Upper lobe of right lung (tissue), 1 donor: ENCODE measurements at regions of chr5 and their contacts with region 1.

Region 1: DNA sequence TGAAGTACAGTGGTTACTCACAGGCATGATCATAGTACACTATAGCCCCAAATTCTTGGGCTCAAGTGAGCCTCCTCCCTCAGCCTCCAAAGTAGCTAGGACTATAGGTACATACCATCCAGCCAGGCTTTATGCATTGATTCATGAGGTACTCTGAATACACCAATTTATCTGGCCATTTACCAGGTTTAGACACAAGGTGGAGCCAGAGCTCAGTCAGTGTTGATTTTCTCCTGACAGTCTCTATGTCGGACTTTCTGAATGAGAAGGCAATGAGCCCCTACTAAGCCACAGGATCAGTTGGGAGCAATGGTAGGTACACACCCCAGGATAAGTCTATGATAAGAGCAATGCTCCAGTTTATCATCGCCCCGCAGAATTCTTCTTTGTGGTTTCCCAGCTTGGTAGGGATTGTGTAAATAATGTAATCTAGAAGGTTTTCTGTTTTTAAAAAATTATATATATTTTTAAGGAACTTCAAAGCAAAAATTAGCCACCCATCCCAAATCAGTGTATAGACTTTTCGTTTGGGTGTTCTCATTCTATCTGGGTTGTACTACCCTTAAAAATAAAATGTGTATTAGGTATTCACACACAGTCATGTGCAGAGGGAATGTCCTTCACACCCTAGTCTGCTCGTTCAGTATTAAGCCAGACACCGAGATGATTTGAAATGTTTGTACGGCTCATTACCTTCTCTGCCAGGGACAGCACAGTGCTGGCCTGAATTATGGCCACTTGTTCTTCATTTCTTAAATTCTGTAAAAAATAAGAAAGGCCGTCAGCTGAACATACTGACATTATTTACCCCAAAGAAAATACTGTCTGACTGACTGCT is 118.4 kb upstream of the DPYSL3 start:
- DNase-seq: no peak
- ATAC-seq: peak; percentile 95
- H3K4me3 ChIP-seq: no peak overlapping the region
- H3K27ac ChIP-seq: no peak overlapping the region
- H3K4me1 ChIP-seq: no peaks in the 10 kb centered on the region
- H3K27me3 ChIP-seq: no peaks in the 10 kb centered on the region
- CTCF ChIP-seq: peak; percentile 73

Region 2: GRCh38 chr5:147530530-147531389 is 97.5 kb before region 1 on chr5:
- intact Hi-C with region 1: no loop called
- DNase-seq: no peak
- ATAC-seq: no peak
- H3K4me3 ChIP-seq: no peak overlapping the region
- H3K27ac ChIP-seq: no peak overlapping the region
- H3K4me1 ChIP-seq: no peaks in the 10 kb centered on the region
- H3K27me3 ChIP-seq: no peaks in the 10 kb centered on the region
- CTCF ChIP-seq: no peak

Region 3: DNA sequence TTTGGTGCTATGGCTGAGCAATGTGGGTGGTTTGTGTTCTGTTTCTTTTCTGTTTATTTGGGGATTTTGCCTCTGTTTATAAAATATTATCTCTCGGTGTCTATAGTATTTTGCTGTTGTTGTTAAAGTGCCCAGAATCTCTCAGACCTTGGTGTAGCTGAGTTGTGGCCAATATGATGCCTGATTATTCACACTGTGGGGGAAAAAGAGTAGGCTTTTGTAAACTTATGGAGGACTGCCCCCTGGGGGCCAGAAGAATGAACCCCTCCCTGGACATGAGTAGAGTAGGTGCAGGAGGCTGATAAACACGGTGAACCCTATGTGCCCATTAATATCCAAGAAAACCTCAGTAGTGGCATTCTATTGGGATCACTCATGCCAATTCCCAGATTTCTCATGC is 69.5 kb before region 1 on chr5:
- intact Hi-C with region 1: no loop called
- DNase-seq: no peak
- ATAC-seq: peak; percentile 83
- H3K4me3 ChIP-seq: no peak overlapping the region
- H3K27ac ChIP-seq: no peak overlapping the region
- H3K4me1 ChIP-seq: peaks cover 15% of the 10 kb centered on the region
- H3K27me3 ChIP-seq: no peaks in the 10 kb centered on the region
- CTCF ChIP-seq: peak; percentile 63

Region 4: DNA sequence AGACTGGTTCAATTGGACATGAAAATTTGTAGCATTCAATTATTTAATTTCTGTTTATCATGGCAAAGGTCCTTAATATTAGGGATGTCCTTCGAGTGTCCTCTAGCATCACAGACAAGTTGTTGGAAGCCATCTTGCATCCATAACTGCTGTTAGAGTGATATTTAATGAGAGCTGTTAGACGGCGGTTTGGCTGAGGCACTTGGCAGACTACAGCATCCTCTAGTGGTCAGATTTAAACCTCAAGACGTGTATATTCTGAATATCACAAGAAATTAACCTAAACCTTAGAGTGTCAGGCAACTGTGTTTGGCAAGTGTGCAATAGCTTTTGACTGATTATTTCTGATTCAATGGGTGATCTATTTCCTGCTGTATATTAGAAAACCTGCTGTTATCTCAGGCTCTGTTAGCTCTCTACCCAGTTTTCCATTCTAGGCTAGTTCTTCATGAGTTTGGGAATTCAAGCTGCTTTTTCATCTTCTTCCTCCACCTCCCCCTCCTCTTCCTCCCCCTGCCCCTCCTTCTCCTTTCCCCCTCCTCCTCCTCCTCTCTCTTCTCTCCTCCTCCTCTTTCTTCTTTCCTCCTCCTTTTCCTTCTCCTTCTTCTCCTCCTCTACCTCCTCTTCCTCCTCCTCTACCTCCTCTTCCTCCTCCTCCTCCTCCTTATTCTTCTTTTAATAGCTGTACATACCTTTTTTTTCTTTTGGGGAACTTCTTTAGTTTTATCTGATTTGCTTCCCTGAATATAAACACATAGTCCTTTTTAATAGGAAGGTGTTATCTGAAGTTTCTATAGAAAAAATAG is 194.6 kb after region 1 on chr5:
- intact Hi-C with region 1: loop called (anchors 10 kb)
- DNase-seq: no peak
- ATAC-seq: peak; percentile 93
- H3K4me3 ChIP-seq: no peak overlapping the region
- H3K27ac ChIP-seq: no peak overlapping the region
- H3K4me1 ChIP-seq: no peaks in the 10 kb centered on the region
- H3K27me3 ChIP-seq: peaks cover 3% of the 10 kb centered on the region
- CTCF ChIP-seq: peak; percentile 89